ENCODE measurements at regions of chr2 and their contacts with region 1.

Region 1: DNA sequence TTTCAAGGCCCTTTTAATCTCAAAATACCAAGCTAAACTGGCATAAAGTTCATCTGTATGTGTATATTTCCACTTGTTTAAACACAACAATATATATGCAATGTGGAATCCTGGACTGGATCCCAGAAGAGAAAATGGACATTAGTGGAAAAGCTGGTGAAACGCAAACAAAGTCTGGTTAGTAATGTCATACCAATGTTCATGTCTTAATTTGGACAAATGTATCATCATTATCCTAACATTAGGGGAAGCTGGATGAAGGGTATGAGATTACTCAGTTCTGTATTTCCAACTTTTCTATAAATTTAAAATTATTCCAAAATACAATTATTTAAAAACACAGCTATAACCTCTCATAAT is 3.8 kb downstream of the SP3 start:
- DNase-seq: no peak
- H3K4me3 ChIP-seq: no peak overlapping the region
- H3K4me3 Mint-ChIP-seq: peak overlapping the region; percentile 74 to 98 (median 97)
- H3K27ac ChIP-seq: no peak overlapping the region
- H3K27ac Mint-ChIP-seq: peak overlapping the region in 7 of 8 donors; percentile 35 to 99 (median 70)
- H3K4me1 ChIP-seq: peaks cover 65% of the 10 kb centered on the region
- H3K4me1 Mint-ChIP-seq: peaks cover 68 to 77% (median 74%) of the 10 kb centered on the region in 3 donors
- H3K27me3 ChIP-seq: no peaks in the 10 kb centered on the region
- H3K27me3 Mint-ChIP-seq: peaks cover 0 to 3% of the 10 kb centered on the region in 2 donors

Region 2: DNA sequence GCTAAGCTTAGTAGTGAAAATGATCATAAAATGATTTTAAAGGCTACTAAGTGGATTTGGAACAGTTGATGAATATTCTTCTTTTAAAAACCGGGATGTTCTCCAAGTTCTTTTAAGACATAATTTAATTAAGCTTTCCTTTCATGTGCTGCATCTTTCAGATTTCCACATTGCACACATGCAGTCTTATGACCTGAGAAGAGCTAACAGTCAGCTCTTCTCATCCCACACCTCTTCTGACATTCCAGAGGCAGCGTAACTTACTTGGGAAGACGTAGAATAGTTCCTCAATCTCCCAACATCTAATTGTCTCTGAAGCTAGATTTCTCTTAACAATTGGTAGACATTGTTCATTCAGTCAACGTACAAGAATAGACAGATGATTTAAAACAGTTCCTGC is 177.9 kb before region 1 on chr2:
- CTCF ChIA-PET with region 1: no interaction called
- POLR2A ChIA-PET with region 1: no interaction called
- DNase-seq: no peak
- H3K4me3 ChIP-seq: no peak overlapping the region
- H3K4me3 Mint-ChIP-seq: no peak overlapping the region
- H3K27ac ChIP-seq: no peak overlapping the region
- H3K27ac Mint-ChIP-seq: no peak overlapping the region
- H3K4me1 ChIP-seq: no peaks in the 10 kb centered on the region
- H3K4me1 Mint-ChIP-seq: no peaks in the 10 kb centered on the region
- H3K27me3 ChIP-seq: no peaks in the 10 kb centered on the region
- H3K27me3 Mint-ChIP-seq: peaks cover 18 to 51% of the 10 kb centered on the region in 2 donors

Region 3: DNA sequence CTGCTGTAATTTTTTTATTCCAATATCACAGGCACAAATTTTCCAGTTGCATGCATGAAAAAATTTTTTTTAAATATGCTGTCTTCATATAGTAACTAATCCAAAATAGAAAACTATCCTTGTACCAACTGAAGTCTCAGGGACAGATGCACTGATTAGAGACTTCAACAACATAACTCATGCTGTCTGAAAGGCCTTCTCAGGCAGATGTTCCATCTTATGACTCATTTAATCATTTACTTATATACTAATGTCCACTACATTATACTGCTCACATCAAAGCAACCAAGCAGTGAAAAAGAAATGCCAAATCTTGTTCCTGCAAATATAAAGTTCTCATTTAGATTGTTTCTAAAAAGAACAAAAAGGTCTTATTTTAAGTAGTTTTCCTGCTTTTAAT is 233.9 kb after region 1 on chr2:
- CTCF ChIA-PET with region 1: no interaction called
- POLR2A ChIA-PET with region 1: interaction called, 13 read pairs
- DNase-seq: no peak
- H3K4me3 ChIP-seq: no peak overlapping the region
- H3K4me3 Mint-ChIP-seq: no peak overlapping the region
- H3K27ac ChIP-seq: no peak overlapping the region
- H3K27ac Mint-ChIP-seq: no peak overlapping the region
- H3K4me1 ChIP-seq: no peaks in the 10 kb centered on the region
- H3K4me1 Mint-ChIP-seq: peaks cover 1 to 10% (median 6%) of the 10 kb centered on the region in 3 donors
- H3K27me3 ChIP-seq: no peaks in the 10 kb centered on the region
- H3K27me3 Mint-ChIP-seq: no peaks in the 10 kb centered on the region

Measured in CD8-positive, alpha-beta memory T cell (primary cell).